Activated B cell treated with CpG ODN at 0.5 μM for 24 hours (primary cell): ENCODE measurements at regions of chr9 and their contacts with region 1.

Region 1: DNA sequence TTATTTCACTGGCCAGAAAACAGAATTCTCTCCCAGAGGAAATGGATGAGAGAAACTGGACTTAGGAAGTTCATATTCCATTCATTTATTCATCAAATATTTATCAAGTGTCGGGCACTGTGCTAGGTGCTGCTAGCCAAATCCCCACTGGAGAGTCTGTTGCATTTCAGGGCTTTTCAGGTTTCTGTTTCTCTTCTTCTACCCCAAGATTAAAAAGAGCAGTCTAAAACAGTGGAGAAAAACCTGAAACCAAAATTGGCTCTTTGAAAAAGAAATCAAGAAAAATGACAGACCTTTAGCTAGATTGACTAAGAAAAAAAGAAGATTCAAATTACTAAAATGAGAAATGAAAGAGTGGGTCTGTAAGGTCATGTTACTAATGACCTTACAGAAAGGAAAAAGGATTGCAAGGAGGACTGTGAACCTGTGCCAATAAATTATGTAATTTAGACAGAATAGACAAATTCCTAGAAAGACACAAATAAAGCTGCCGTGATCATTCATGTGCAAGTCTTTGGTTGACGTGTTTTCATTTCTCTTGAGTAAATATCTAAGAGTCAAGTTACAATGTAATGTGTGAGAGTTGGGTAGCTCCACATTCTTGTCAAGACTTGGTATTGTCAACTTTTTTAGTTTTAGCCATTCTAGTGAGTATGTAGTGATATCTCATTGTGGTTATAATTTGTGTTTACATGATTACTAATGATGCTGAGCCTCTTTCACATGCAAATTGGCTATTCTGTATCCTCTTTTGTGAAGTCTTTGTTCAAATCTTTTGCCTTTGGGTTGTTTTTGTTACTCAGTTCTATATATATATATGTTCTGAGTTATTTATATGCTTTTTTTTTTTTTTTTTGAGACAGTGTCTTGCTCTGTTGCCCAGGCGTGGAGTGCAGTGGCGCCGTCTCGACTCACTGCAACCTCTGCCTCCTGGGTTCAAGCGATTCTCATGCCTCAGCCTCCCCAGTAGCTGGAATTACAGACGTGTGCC is 23.7 kb downstream of the SNX30 start:
- DNase-seq: no peak
- ATAC-seq: peak; percentile 11
- H3K4me3 Mint-ChIP-seq: peak overlapping the region; percentile 13
- H3K27ac Mint-ChIP-seq: peak overlapping the region; percentile 59
- H3K4me1 Mint-ChIP-seq: peaks cover 57% of the 10 kb centered on the region
- H3K27me3 Mint-ChIP-seq: no peaks in the 10 kb centered on the region
- CTCF ChIP-seq: no peak

Region 2: GRCh38 chr9:112743216-112743836 is 31.0 kb before region 1 on chr9:
- CTCF ChIA-PET with region 1: no interaction called
- POLR2A ChIA-PET with region 1: interaction called, 10 read pairs
- intact Hi-C with region 1: no loop called
- DNase-seq: no peak
- ATAC-seq: peak; percentile 70
- H3K4me3 Mint-ChIP-seq: peak overlapping the region; percentile 7
- H3K27ac Mint-ChIP-seq: peak overlapping the region; percentile 13
- H3K4me1 Mint-ChIP-seq: peaks cover 35% of the 10 kb centered on the region
- H3K27me3 Mint-ChIP-seq: peaks cover 6% of the 10 kb centered on the region
- CTCF ChIP-seq: no peak